Activated naive CD4-positive, alpha-beta T cell treated with anti-CD3 and anti-CD28 coated beads for 36 hours (primary cell): ENCODE measurements at regions of chr1 and their contacts with region 1.

Region 1: GRCh38 chr1:1194723-1195122 is 11.7 kb downstream of the TNFRSF18 start:
- DNase-seq: no peak
- H3K4me3 Mint-ChIP-seq: no peak overlapping the region
- H3K27ac Mint-ChIP-seq: no peak overlapping the region
- H3K4me1 Mint-ChIP-seq: peaks cover 2% of the 10 kb centered on the region
- H3K27me3 Mint-ChIP-seq: no peaks in the 10 kb centered on the region

Region 2: DNA sequence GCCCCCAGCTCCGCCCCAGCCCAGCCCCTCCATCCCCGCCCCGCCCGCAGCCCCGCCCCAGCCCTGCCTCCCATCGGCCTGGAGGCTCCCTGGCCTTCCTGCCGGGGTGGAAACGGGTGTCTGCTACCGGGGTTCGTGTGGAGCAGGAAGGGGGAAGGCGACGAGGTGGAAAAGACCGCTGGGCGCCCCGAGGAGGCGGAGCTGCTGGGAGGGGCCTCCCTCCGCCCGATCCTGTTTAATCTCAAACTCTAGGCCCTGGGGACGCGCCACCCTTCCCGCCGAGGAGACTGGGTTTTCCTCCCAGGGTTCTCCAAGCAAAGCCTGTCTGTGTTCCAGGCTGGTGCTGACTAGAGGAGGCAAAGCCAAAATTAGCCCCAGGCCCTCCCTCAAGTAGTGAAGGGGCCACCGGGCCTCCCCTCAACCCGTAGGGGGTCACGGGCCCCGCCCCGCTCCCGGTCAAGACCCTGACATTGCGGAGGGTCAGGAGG is 37.3 kb before region 1 on chr1:
- CTCF ChIA-PET with region 1: no interaction called
- intact Hi-C with region 1: loop called (anchors 5 kb)
- DNase-seq: peak; percentile 79
- H3K4me3 Mint-ChIP-seq: peak overlapping the region; percentile 75
- H3K27ac Mint-ChIP-seq: peak overlapping the region; percentile 46
- H3K4me1 Mint-ChIP-seq: no peaks in the 10 kb centered on the region
- H3K27me3 Mint-ChIP-seq: no peaks in the 10 kb centered on the region

Region 3: DNA sequence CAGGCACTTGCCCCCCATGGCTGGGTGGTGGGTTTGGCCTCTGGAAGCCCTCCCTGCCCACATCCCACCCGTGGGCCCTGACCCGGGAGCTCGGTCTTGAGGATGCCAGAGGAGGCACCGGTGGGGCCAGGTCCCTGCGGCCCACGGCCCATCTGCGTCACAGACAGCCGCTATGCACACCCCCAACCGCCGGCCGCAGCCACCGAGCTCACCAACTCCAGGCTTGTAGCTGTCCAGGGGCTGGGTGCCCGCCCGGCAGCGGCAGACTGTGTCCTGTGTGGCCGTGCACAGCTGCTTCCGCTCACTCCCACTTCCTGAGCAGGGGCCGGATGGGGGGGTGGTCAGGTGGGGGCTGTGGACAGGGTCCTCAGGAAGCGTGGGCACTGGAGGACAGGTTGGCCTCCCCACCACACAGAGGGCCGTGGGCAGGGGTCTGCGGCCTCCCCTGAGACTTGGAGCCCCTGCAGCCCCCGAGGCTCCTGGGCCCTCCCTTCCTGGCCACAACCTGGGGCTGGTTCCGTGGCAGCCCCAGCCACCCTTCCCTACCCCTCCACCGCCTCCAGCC is 18.1 kb after region 1 on chr1:
- CTCF ChIA-PET with region 1: no interaction called
- intact Hi-C with region 1: no loop called
- DNase-seq: peak; percentile 54
- H3K4me3 Mint-ChIP-seq: peak overlapping the region; percentile 74
- H3K27ac Mint-ChIP-seq: peak overlapping the region; percentile 30
- H3K4me1 Mint-ChIP-seq: peaks cover 50% of the 10 kb centered on the region
- H3K27me3 Mint-ChIP-seq: no peaks in the 10 kb centered on the region

Region 4: GRCh38 chr1:1489231-1489630 is 294.5 kb after region 1 on chr1:
- CTCF ChIA-PET with region 1: no interaction called
- intact Hi-C with region 1: no loop called
- DNase-seq: no peak
- H3K4me3 Mint-ChIP-seq: no peak overlapping the region
- H3K27ac Mint-ChIP-seq: no peak overlapping the region
- H3K4me1 Mint-ChIP-seq: no peaks in the 10 kb centered on the region
- H3K27me3 Mint-ChIP-seq: no peaks in the 10 kb centered on the region